Activated CD4-positive, alpha-beta T cell treated with anti-CD3 and anti-CD28 coated beads, Interleukin-2, amount 10 ng/mL, durations not matched to agents 24 days and 14 days (primary cell): ENCODE measurements at regions of chr6 and their contacts with region 1.

Region 1: DNA sequence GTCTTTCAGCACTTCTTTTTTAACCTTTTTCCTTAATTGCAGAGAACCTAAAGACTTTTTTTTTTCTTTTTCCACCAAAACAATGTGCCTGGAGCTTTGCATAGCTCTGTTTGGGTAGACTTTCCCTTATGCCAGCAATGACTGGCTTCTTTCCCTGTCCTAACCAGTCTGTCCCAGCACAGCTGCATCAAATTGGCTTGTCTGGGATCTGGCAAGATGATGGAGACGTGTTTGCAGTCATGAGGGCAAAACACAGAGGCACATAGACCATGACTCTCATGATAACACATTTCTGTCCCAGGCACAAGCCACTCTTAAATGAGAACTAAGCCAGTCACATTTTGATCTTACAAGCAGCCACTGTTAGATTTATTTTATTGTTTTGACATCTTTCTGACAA is 16.5 kb downstream of the HEY2 start:
- DNase-seq: no peak
- H3K4me3 Mint-ChIP-seq: no peak overlapping the region
- H3K27ac Mint-ChIP-seq: no peak overlapping the region
- H3K4me1 Mint-ChIP-seq: peaks cover 1% of the 10 kb centered on the region
- H3K27me3 Mint-ChIP-seq: peaks cover 49% of the 10 kb centered on the region

Region 2: GRCh38 chr6:125153391-125154117 is 612.4 kb before region 1 on chr6 and contains the start of gene TPD52L1:
- intact Hi-C with region 1: loop called (anchors 5 kb)
- DNase-seq: peak; percentile 87
- H3K4me3 Mint-ChIP-seq: peak within 1 kb of the TSS; percentile 79
- H3K27ac Mint-ChIP-seq: no peak within 1 kb of the TSS
- H3K4me1 Mint-ChIP-seq: peaks cover 7% of the 10 kb centered on the region
- H3K27me3 Mint-ChIP-seq: peaks cover 47% of the 10 kb centered on the region
- total RNA-seq, gene TPD52L1: not detected in 2 replicates

Region 3: DNA sequence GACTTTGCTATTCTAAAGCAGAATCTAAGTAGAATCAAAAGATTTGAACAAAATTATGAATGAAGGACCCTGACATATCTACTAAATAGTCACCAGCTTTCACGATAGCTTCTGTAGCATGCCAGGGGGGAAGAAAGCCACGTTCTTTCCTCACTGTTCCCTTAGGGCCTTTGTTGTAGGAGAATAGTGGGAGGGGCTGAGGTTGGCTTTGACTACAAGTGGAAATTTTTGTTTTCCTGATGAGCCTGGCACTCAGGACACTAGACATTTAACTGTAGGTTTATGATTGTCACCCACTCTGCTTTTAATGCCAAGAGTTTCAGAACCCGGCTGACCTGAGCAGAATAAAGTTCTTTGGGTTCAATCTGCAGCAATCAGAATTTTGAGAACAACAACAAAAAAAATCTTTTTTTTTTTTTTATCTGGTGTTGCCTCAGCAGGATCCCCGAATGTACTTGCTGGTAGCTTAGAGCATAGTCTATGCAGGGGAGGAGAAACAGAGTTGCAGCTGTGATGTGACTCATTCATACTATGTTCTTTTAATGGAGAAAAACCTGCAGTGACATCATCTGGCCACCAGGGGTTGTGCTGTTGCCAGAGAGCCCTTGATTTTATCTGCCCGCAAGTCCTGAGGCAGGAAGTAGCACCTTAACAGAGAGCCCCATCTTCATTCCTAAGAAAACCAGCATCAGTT is 573.9 kb before region 1 on chr6:
- intact Hi-C with region 1: loop called (anchors 2 kb)
- DNase-seq: peak; percentile 85
- H3K4me3 Mint-ChIP-seq: no peak overlapping the region
- H3K27ac Mint-ChIP-seq: no peak overlapping the region
- H3K4me1 Mint-ChIP-seq: peaks cover 2% of the 10 kb centered on the region
- H3K27me3 Mint-ChIP-seq: peaks cover 17% of the 10 kb centered on the region